B cell (primary cell): ENCODE measurements at regions of chr15 and their contacts with region 1.

Region 1: DNA sequence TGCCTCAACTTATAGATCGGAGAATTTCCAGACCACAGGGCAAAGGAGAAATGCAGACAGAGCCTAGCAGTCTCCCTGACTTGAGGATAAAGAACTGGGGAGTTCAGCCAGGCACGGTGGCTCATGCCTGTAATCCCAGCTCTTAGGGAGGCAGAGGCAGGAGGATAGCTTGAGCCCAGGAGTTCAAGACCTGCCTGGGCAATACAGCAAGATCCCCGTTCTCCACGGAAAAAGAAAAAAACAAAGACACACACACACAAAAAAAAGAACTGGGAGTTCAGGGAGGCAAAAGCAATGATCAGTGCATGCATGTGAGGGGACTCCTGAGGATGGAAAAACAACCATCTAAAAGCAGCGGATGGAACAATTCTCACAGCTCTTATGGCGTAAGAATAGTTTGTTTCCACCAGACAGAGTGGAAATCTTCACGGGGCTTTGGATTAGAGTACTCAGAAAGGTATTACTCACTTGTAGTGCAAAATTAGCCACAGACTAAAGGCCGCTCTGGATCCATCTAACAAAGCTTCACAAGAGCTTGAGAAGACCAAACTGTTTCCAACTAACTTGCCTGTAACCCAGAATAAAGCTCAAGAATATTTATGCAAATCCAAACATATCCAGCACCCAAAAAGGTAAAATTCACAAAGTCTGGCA is 16.3 kb downstream of the SEC11A start:
- DNase-seq: no peak
- ATAC-seq: no peak
- H3K4me3 ChIP-seq: no peak overlapping the region
- H3K4me3 Mint-ChIP-seq: no peak overlapping the region
- H3K27ac ChIP-seq: no peak overlapping the region
- H3K27ac Mint-ChIP-seq: no peak overlapping the region
- H3K4me1 ChIP-seq: peaks cover 11 to 23% of the 10 kb centered on the region in 2 donors
- H3K4me1 Mint-ChIP-seq: peaks cover 65% of the 10 kb centered on the region
- H3K27me3 ChIP-seq: no peaks in the 10 kb centered on the region
- H3K27me3 Mint-ChIP-seq: no peaks in the 10 kb centered on the region
- CTCF ChIP-seq: no peak

Region 2: GRCh38 chr15:84671211-84671610 is 28.5 kb before region 1 on chr15:
- CTCF ChIA-PET with region 1: no interaction called
- POLR2A ChIA-PET with region 1: interaction called, 10 read pairs
- intact Hi-C with region 1: no loop called
- DNase-seq: no peak
- ATAC-seq: no peak
- H3K4me3 ChIP-seq: no peak overlapping the region
- H3K4me3 Mint-ChIP-seq: no peak overlapping the region
- H3K27ac ChIP-seq: no peak overlapping the region
- H3K27ac Mint-ChIP-seq: peak overlapping the region; percentile 22
- H3K4me1 ChIP-seq: no peaks in the 10 kb centered on the region
- H3K4me1 Mint-ChIP-seq: no peaks in the 10 kb centered on the region
- H3K27me3 ChIP-seq: no peaks in the 10 kb centered on the region
- H3K27me3 Mint-ChIP-seq: no peaks in the 10 kb centered on the region
- CTCF ChIP-seq: no peak

Region 3: DNA sequence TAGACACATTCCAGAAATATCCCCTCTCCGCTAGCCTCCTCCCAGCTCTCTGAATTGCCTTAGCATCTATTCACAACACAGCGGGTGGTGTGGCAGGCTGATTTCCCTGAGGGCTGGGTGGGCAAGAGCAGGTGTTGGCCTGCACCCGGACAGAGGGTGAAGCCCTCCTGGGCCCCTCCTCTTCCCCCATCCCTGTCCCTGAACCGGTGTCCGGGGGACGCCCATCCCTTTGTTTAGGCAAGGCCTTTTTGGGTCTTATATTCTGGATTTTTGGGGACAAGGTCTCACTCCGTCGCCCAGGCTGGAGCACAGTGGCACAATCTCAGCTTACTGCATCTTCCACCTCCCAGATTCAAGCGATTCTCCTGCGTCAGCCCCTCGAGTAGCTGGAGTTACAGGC is 1150.3 kb after region 1 on chr15:
- CTCF ChIA-PET with region 1: no interaction called
- POLR2A ChIA-PET with region 1: no interaction called
- intact Hi-C with region 1: no loop called
- DNase-seq: no peak
- ATAC-seq: no peak
- H3K4me3 ChIP-seq: no peak overlapping the region
- H3K4me3 Mint-ChIP-seq: no peak overlapping the region
- H3K27ac ChIP-seq: no peak overlapping the region
- H3K27ac Mint-ChIP-seq: no peak overlapping the region
- H3K4me1 ChIP-seq: peaks cover 0 to 3% of the 10 kb centered on the region in 2 donors
- H3K4me1 Mint-ChIP-seq: peaks cover 2% of the 10 kb centered on the region
- H3K27me3 ChIP-seq: peaks cover 0 to 4% (median 0%) of the 10 kb centered on the region in 4 experiments
- H3K27me3 Mint-ChIP-seq: peaks cover 42% of the 10 kb centered on the region
- CTCF ChIP-seq: no peak